ENCODE measurements at regions of chr12 and their contacts with region 1.

Region 1: GRCh38 chr12:89461649-89462612 is 62.7 kb downstream of the GALNT4 start:
- DNase-seq: peak; percentile 70 to 76 (median 76)
- H3K4me3 ChIP-seq: peak overlapping the region in 1 of 7 experiments; percentile 48
- H3K27ac ChIP-seq: no peak overlapping the region
- H3K4me1 ChIP-seq: peaks cover 0 to 26% (median 10%) of the 10 kb centered on the region in 4 experiments
- H3K27me3 ChIP-seq: no peaks in the 10 kb centered on the region

Region 2: DNA sequence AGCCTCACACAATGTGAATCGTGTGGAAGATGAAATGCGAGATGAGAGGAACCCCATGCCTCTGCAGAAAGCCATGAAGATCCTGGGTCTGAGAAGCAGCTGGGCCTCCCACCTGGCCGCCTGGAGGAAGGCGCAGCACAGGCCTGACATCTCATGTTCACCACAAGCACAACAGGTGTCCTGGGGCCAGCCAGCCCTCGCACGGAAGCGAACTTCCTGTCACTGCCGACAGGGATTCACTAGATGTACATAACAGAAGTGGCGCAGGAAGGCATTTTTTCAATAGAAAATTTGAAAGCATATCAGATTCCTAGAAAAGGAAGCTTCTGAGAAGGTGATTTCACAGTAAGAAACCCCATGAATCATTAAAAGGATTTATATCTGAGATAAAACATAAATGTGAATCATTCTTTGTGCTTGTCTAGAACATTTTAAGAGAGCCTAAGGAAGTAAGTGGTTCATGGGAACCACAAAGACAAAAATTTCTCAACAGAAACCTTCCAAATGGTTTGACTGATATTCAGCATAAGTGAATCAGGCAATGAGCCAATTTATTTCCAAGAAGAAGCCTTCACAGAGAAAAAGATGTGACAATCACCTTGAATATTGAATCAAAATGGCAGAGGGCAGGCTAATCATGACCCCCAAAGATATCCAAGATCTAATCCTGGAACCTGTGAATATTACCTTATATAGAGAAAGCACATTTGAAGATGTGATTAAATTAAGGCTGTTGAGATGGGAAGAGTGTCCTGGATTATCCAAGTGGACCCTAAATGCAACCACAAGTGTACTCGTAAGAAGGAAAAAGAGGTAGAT is 421.6 kb before region 1 on chr12:
- CTCF ChIA-PET with region 1: interaction called, 22 read pairs
- POLR2A ChIA-PET with region 1: no interaction called
- DNase-seq: peak; percentile 84 to 97 (median 95)
- H3K4me3 ChIP-seq: peak overlapping the region in 1 of 7 experiments; percentile 23
- H3K27ac ChIP-seq: peak overlapping the region; percentile 29 to 57
- H3K4me1 ChIP-seq: peaks cover 8 to 43% (median 39%) of the 10 kb centered on the region in 4 experiments
- H3K27me3 ChIP-seq: no peaks in the 10 kb centered on the region

Region 3: DNA sequence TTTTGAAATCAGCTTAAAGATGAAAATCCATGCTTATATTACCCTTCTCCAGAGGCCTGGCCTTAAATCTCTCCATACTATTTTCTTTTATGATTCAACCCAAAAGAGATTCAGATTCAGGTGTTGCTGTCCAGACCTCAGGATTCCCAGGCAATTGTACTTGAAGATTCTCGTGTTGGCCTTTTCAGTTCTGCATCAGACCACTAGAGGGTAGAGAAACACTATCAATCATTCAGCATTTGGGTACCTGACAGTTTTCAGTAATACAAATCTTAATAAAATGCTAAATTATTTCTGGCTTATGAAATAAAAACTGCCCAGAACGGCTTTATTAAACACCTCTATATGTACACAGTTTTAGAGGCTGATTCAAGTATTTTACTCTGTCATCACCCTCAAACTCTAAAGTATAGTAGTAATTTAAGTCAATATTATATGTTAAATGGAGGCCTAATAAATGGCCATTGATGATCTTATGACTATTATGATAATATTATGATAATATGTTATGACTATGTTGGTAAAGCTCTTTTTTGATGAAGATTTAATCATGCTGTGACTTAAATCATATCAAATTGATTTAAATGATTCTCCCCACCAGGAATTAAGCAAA is 410.8 kb before region 1 on chr12:
- CTCF ChIA-PET with region 1: interaction called, 59 read pairs
- POLR2A ChIA-PET with region 1: no interaction called
- DNase-seq: peak; percentile 70 to 81 (median 76)
- H3K4me3 ChIP-seq: no peak overlapping the region
- H3K27ac ChIP-seq: no peak overlapping the region
- H3K4me1 ChIP-seq: peaks cover 0 to 2% (median 0%) of the 10 kb centered on the region in 4 experiments
- H3K27me3 ChIP-seq: no peaks in the 10 kb centered on the region

Region 4: GRCh38 chr12:89084751-89085150 is 377.2 kb before region 1 on chr12:
- CTCF ChIA-PET with region 1: no interaction called
- POLR2A ChIA-PET with region 1: no interaction called
- DNase-seq: no peak
- H3K4me3 ChIP-seq: no peak overlapping the region
- H3K27ac ChIP-seq: no peak overlapping the region
- H3K4me1 ChIP-seq: peaks cover 0 to 6% (median 0%) of the 10 kb centered on the region in 4 experiments
- H3K27me3 ChIP-seq: no peaks in the 10 kb centered on the region

Region 5: DNA sequence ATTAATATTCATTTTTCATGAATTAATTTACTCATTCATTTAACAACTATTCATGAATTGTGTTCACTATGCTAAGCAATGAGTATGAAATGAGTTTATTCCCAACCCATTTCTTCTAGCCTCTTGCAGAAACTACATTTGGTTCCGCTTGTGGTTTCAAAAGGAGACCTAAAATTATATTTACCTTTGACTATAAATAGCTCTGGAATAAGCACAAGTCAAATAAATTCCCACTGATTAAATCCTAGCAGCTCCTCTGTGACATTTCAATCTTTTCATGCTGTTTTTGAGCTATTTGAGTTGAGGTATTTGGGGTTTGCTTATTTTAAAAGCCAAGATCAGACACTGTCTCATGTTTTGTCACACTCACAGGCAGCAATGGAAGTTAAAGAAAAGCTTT is 156.6 kb before region 1 on chr12:
- CTCF ChIA-PET with region 1: no interaction called
- POLR2A ChIA-PET with region 1: no interaction called
- DNase-seq: no peak
- H3K4me3 ChIP-seq: no peak overlapping the region
- H3K27ac ChIP-seq: no peak overlapping the region
- H3K4me1 ChIP-seq: peaks cover 0 to 32% (median 16%) of the 10 kb centered on the region in 4 experiments
- H3K27me3 ChIP-seq: no peaks in the 10 kb centered on the region

Region 6: DNA sequence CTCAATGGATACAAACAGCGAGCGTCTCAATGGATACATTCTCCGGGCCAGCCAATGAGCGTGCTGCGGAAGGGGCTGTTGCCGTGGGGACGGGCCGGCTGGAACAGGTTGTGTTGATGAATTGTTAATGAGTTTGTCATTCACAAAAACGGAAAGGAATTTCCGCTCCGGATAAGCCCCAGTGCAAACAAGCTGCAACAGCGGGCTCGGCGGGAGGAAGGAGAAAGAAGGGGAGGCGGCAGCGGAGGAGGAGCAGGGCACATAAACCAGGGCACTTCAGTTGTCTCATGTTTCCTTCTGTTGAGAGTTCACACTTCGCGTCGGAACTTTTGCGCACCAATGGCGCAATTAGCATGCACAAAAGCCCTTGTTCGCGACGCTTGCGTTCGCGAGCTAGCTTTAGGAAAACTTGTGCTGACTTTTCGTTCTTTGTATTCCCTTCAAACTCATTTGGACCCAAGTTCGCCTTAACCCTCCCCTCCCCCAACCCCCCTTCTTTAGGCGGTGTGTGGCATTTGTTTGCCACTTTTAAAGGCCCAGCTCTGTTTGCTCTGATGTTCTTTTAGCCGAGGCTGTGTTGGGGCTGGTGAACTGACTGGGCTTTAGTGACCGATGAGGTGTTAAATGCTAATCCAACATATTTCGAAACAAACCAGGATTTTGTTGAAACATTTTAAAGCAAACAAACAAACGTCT is 109.3 kb before region 1 on chr12 and contains the start of gene DUSP6:
- CTCF ChIA-PET with region 1: interaction called, 10 read pairs
- POLR2A ChIA-PET with region 1: interaction called, 3 read pairs
- DNase-seq: peak; percentile 97 to 99 (median 98)
- H3K4me3 ChIP-seq: peak within 1 kb of the TSS; percentile 87 to 97 (median 93)
- H3K27ac ChIP-seq: peak within 1 kb of the TSS; percentile 86 to 88
- H3K4me1 ChIP-seq: peaks cover 26 to 73% (median 60%) of the 10 kb centered on the region in 4 experiments
- H3K27me3 ChIP-seq: no peaks in the 10 kb centered on the region

Region 7: GRCh38 chr12:89433634-89434033 is 28.3 kb before region 1 on chr12:
- CTCF ChIA-PET with region 1: no interaction called
- POLR2A ChIA-PET with region 1: no interaction called
- DNase-seq: no peak
- H3K4me3 ChIP-seq: no peak overlapping the region
- H3K27ac ChIP-seq: no peak overlapping the region
- H3K4me1 ChIP-seq: no peaks in the 10 kb centered on the region
- H3K27me3 ChIP-seq: no peaks in the 10 kb centered on the region

Region 8: DNA sequence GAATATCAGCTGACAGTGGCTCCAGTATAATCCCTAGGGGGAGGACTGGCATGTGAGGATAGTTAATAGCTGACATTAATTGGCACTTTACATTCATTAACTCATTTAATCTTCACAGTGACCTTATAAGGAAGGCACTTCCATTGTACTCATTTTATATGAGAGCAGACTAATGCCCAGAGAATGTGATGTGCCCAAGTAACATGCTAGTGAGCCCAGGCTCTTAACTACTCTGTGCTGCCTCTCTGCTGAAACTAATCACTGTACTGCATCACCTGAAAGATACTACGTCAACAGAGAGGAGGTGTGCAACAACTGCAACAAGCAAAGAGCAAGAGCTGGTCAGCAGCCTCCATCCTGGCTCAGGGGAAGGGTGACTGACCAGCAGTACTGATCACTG is 22.5 kb after region 1 on chr12:
- CTCF ChIA-PET with region 1: no interaction called
- POLR2A ChIA-PET with region 1: no interaction called
- DNase-seq: no peak
- H3K4me3 ChIP-seq: no peak overlapping the region
- H3K27ac ChIP-seq: no peak overlapping the region
- H3K4me1 ChIP-seq: no peaks in the 10 kb centered on the region
- H3K27me3 ChIP-seq: no peaks in the 10 kb centered on the region

Region 9: GRCh38 chr12:89529738-89530137 is 67.8 kb after region 1 on chr12:
- CTCF ChIA-PET with region 1: interaction called, 58 read pairs
- POLR2A ChIA-PET with region 1: no interaction called
- DNase-seq: peak; percentile 64 to 83 (median 79)
- H3K4me3 ChIP-seq: no peak overlapping the region
- H3K27ac ChIP-seq: no peak overlapping the region
- H3K4me1 ChIP-seq: peaks cover 4 to 23% (median 11%) of the 10 kb centered on the region in 4 experiments
- H3K27me3 ChIP-seq: no peaks in the 10 kb centered on the region